ENCODE measurements at regions of chr5 and their contacts with region 1.

Region 1: GRCh38 chr5:173293817-173294672 is 34.2 kb downstream of the STC2 start:
- DNase-seq: peak; percentile 86
- H3K4me3 ChIP-seq: peak overlapping the region in 1 of 8 donors; percentile 22
- H3K27ac ChIP-seq: no peak overlapping the region
- H3K4me1 ChIP-seq: peaks cover 7 to 19% (median 11%) of the 10 kb centered on the region in 6 donors
- H3K27me3 ChIP-seq: peaks cover 0 to 68% (median 10%) of the 10 kb centered on the region in 7 donors
- CTCF ChIP-seq: peak; percentile 47 to 86 (median 75)
- POLR2A ChIP-seq: no peak

Region 2: GRCh38 chr5:172985596-172985995 is 308.4 kb before region 1 on chr5:
- intact Hi-C with region 1: no loop called
- DNase-seq: no peak
- H3K4me3 ChIP-seq: peak overlapping the region in 3 of 8 donors; percentile 94 to 98 (median 94)
- H3K27ac ChIP-seq: peak overlapping the region in 4 of 8 donors; percentile 18 to 98 (median 96)
- H3K4me1 ChIP-seq: peaks cover 19 to 74% (median 48%) of the 10 kb centered on the region in 6 donors
- H3K27me3 ChIP-seq: no peaks in the 10 kb centered on the region
- CTCF ChIP-seq: no peak
- POLR2A ChIP-seq: no peak

Region 3: GRCh38 chr5:173352366-173353349 is 58.6 kb after region 1 on chr5:
- intact Hi-C with region 1: no loop called
- DNase-seq: no peak
- H3K4me3 ChIP-seq: no peak overlapping the region
- H3K27ac ChIP-seq: no peak overlapping the region
- H3K4me1 ChIP-seq: no peaks in the 10 kb centered on the region
- H3K27me3 ChIP-seq: peaks cover 0 to 40% (median 0%) of the 10 kb centered on the region in 7 donors
- CTCF ChIP-seq: no peak
- POLR2A ChIP-seq: no peak

Region 4: DNA sequence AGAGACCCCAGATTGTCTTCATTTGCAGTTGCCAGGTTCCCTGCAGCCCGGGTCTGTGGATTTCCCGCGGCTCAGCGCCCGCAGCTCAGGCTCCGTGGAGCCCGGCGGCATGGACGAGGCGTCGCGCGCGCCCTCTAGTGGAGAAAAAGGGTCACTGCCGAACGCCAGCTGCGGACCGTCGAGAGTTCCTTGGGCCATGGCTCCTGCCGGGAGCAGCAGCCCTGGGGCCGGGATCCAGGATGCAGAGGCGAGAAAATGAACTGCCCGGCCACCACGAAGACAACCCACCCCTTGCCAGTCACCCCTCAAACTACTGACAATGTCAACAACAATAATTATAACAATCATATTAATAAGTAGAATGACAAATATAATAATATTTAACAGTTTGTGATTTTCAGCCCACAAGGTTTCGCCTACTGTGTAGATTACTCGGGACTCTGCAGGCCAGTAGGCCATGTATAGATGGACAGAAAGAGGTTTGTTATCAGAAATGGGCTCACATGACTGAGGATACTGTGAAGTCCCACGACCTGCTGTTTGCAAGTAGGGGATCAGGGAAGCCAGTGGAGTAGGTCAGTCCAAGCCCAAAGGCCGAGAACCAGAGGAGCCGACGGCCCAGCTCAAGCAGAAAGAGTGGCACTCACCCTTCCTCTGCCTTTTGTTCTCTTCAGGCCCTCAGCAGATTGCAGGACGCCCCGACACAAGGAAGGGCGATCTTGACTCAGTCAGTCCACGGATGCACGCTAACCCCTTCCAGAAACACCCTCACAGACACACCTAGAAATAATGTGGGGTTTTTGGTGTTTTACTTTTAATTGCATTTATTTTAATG is 279.3 kb after region 1 on chr5:
- intact Hi-C with region 1: loop called (anchors 2 kb)
- DNase-seq: peak; percentile 93
- H3K4me3 ChIP-seq: peak overlapping the region in 1 of 8 donors; percentile 14
- H3K27ac ChIP-seq: no peak overlapping the region
- H3K4me1 ChIP-seq: peaks cover 0 to 9% (median 7%) of the 10 kb centered on the region in 6 donors
- H3K27me3 ChIP-seq: peaks cover 0 to 53% (median 19%) of the 10 kb centered on the region in 7 donors
- CTCF ChIP-seq: peak; percentile 69 to 96 (median 93)
- POLR2A ChIP-seq: no peak

Region 5: DNA sequence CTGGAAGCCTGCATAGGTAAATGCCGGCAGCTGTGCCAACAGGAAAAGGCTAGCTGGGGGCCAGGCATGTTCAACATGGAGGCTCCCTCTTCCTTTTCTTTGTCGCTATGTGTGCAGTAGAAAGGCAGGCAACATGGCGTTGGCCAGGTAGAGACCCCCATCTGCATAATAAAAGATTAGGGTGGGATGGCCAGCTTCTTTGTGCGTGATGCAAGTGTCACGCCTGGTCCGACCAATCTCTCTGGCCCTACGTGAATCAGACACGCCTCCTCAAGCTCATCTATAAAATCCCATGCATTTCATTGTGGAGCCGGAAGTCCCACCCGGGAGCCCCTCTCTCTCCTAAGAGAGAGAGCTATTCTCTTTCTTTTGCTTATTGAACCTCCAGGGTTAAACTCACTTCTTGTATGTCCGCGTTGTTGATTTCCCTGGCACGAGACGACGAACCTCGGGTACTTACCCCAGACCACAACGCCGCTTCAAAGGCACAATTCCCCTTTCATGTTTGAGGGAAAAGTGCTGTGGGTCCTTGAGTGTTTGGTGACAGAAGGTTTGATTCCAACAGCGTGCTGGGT is 669.9 kb after region 1 on chr5:
- intact Hi-C with region 1: loop called (anchors 10 kb)
- DNase-seq: no peak
- H3K4me3 ChIP-seq: no peak overlapping the region
- H3K27ac ChIP-seq: no peak overlapping the region
- H3K4me1 ChIP-seq: no peaks in the 10 kb centered on the region
- H3K27me3 ChIP-seq: no peaks in the 10 kb centered on the region
- CTCF ChIP-seq: no peak
- POLR2A ChIP-seq: no peak